Activated CD4-positive, alpha-beta T cell treated with anti-CD3 and anti-CD28 coated beads for 36 hours (primary cell): ENCODE measurements at regions of chr9 and their contacts with region 1.

Region 1: GRCh38 chr9:131747356-131747755 is 7.5 kb upstream of the RAPGEF1 start:
- DNase-seq: no peak
- ATAC-seq: peak; percentile 50
- H3K4me3 Mint-ChIP-seq: no peak overlapping the region
- H3K27ac Mint-ChIP-seq: no peak overlapping the region
- H3K4me1 Mint-ChIP-seq: peaks cover 28% of the 10 kb centered on the region
- H3K27me3 Mint-ChIP-seq: no peaks in the 10 kb centered on the region

Region 2: DNA sequence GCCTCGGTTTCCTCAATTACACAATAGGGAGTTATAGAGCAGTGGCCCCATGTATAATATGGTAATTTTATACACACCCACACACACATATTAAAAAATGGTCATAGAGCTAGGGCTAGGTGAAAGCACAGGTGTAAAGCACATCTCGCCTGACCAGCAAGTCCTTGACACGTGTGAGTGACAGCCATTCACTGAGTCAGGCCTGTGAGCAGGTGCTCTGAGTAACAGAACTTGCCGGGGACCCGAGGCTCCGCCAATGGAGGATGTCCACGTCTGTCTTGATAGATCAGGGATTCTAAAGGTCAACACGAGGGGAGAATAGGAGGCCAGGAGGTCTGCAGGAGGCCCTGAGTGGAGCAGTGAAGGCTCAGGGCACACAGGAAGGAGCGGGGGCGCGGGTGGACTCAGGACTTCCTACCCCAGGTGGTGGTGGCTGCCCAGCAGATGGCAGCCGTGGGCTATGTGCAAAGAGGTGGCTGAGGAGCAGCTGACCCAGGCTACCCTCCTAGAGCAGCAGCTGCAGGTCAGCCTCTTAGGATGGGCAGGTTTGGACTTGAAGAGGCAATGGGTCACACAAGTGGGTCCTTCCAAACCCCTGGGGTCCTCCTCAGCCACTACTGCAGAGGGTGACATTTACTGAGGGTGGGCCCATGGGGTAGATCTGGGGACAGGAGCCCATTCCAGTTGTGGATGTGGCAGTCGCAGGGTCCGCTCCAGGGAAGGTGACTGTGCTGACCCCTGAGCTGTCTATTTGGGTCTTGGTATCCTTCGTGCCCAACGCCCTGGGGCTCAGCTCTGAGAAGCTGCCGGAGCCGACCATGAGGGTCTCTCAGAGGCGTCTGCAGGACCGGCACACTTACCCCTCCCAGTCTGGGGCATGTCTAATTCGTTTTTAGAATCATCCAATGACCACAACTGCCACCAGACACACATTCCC is 156.2 kb before region 1 on chr9:
- CTCF ChIA-PET with region 1: interaction called, 13 read pairs
- POLR2A ChIA-PET with region 1: no interaction called
- intact Hi-C with region 1: loop called (anchors 1 kb)
- DNase-seq: peak; percentile 90
- ATAC-seq: peak; percentile 94
- H3K4me3 Mint-ChIP-seq: no peak overlapping the region
- H3K27ac Mint-ChIP-seq: peak overlapping the region; percentile 85
- H3K4me1 Mint-ChIP-seq: peaks cover 28% of the 10 kb centered on the region
- H3K27me3 Mint-ChIP-seq: no peaks in the 10 kb centered on the region

Region 3: GRCh38 chr9:131690950-131691573 is 56.3 kb before region 1 on chr9:
- CTCF ChIA-PET with region 1: no interaction called
- POLR2A ChIA-PET with region 1: no interaction called
- intact Hi-C with region 1: no loop called
- DNase-seq: no peak
- ATAC-seq: no peak
- H3K4me3 Mint-ChIP-seq: no peak overlapping the region
- H3K27ac Mint-ChIP-seq: peak overlapping the region; percentile 40
- H3K4me1 Mint-ChIP-seq: peaks cover 86% of the 10 kb centered on the region
- H3K27me3 Mint-ChIP-seq: no peaks in the 10 kb centered on the region